HEK293 (cell line): ENCODE measurements at regions of chr4 and their contacts with region 1.

Region 1: DNA sequence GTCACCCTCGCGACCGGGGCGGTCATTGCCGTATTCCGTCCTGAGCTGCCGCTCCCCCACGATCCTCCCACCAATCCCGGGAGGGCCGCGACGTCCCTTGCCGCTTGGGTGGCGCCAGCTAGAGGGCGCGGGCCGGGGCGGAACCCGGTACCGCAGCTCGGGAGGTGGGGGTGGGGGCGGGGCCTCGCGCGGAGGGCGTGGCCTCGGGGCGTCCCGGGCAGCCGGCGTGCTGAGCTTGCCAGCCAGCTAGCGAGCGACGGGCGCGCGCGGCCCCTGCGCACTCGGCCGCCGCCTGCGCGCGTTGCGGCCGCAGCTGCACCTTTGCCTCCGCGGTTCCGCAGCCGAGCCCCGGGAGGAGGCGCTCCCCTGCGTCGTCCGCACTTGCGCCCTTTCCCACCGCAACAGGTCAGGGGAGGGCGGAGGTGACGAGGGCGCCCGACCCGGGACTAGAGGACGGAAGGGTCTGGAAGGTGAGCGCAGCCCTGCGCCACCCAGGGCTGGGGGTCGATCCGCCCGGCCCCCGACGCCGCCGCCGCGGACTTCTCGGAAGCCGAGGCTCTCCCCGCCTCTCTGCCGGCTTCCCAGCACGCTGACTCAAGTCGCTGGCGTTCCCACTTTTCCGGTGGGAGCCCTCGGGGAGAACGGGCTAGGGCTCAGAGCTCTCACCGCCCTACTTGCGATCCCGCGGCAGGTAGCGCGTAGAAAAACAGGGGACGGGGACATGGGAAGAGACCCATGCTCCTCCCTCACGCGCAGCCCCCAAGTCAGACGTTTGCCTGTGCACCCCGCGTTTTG is at the start of gene AFF1:
- H3K4me3 ChIP-seq: peak within 1 kb of the TSS; percentile 67
- H3K27ac ChIP-seq: peak within 1 kb of the TSS; percentile 88
- H3K4me1 ChIP-seq: peaks cover 4% of the 10 kb centered on the region; the same call in 1 of the 2 replicates
- CTCF ChIP-seq: peak; percentile 72

Region 2: DNA sequence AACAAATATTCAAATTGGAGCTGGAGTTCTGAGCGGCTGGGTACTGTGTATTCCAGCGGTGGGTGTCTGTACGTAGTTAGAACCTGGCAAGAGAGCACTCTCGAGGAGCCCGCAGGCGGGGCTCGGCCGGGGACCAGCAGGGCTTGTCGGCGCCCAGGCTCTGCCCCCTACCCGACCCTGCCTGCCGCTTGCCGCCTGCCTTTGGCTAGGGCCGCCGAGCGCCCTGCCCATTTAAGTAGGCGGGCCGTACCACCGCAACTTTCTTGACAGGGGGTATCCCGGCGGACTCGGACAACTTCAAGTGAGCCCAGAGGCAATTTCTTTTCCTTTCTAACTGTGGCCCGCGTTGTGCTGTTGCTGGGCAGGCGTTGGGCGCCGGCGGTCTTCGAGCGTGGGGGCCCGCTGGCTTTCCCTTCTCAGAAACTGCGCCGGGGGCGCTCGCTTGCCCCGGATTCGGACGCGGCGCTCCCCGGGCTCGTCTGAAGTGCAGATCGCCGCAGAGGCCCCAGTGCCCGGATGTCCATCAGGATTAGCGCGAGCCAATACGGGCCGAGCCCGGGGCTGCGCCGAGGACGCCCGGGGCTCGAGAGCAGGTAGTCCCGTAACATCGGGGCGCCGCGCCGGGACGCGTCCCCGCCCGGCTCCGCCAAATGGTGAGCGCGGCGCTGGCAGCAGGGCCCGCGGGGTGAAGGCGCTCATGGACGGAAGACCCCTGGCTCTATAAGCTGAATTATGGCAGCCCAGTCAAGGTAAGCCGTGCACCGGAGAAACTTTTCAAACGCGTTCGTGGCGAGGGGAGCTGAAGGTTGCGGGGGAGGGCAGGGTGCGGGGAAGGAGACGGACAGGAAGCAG is 71.9 kb after region 1 on chr4:
- CTCF ChIA-PET with region 1: interaction called, 8 read pairs
- POLR2A ChIA-PET with region 1: interaction called, 69 read pairs
- H3K4me3 ChIP-seq: peak overlapping the region; percentile 58
- H3K27ac ChIP-seq: peak overlapping the region; percentile 95
- H3K4me1 ChIP-seq: peaks cover 3% of the 10 kb centered on the region; the same call in 1 of the 2 replicates
- CTCF ChIP-seq: peak; percentile 46; the same call in 1 of the 2 replicates

Region 3: DNA sequence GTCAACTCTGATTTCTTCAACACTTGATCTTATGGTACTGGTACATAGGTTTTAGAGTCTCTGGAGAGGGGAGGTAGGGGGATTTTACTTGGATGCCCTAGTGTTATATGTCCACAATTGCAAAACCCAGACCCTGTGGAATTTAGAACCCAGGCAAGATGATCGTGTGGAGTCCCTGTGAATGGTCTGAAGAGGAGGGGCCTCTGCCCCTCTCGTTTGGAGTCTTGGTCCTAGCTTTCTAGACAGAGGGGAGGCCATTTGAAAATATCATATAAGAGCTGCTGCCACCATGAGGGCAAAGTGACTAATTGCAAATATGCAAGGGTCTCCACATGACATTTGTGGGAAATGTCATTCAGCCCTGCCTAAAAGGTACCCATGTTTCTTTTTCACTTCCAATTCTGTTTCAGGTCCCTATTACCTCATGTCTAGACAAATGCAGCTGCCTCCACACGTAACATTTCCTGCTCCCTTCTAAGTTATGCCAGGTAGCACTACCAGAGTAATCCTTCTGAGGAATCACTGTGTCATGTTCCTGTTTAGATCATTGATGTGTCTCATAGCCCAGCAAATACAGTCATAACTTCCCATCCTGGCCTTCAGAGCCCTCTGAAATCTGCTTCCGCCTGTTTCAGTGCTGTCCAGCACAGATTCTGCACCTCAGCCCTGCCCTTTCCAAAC is 158.6 kb after region 1 on chr4:
- CTCF ChIA-PET with region 1: interaction called, 6 read pairs
- POLR2A ChIA-PET with region 1: interaction called, 13 read pairs
- H3K4me3 ChIP-seq: no peak overlapping the region
- H3K27ac ChIP-seq: no peak overlapping the region
- H3K4me1 ChIP-seq: peaks cover 5% of the 10 kb centered on the region; the same call in 1 of the 2 replicates
- CTCF ChIP-seq: no peak

Region 4: DNA sequence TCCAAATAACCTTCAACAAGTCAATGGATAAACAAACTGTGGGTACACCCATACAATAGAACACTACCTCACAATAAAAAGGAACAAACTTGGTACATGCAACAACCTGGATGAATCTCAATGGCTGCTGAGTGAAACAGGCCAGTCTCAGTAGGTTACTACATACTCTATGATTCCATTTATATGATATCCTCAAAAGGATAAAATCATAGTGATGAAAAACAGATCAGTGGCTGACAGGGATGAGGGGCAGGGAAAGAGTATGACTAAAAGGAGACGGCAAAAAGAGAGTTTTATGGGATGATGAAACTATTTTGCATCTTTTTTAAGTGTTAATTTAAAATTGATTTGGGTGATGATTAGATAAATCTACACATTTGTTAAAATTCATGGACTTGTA is 269.6 kb after region 1 on chr4:
- CTCF ChIA-PET with region 1: no interaction called
- POLR2A ChIA-PET with region 1: no interaction called
- H3K4me3 ChIP-seq: no peak overlapping the region
- H3K27ac ChIP-seq: no peak overlapping the region
- H3K4me1 ChIP-seq: no peaks in the 10 kb centered on the region
- CTCF ChIP-seq: no peak